OCI-LY7 (cell line): ENCODE measurements at regions of chr12 and their contacts with region 1.

Region 1: DNA sequence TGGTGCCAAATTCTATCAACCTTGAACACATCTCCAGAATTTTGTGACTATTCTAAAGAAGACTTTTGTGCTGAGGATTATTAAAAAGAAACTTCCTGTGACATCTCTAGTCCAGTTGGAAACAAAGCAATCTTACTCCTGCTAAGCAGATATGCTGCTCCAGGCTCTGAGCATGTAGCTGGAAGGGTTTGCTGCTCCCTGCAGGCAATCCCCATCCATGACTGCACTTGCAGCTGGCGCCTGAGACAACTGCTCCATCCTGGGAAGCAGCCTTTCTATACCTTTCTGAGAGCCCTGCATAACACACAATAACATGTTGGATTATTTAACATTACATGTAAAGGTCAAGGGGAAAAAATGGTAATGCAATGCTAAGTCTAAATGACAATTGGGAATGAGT is 105.1 kb downstream of the NDUFA12 start:
- DNase-seq: no peak
- H3K4me3 ChIP-seq: no peak overlapping the region
- H3K27ac ChIP-seq: no peak overlapping the region
- H3K4me1 ChIP-seq: no peaks in the 10 kb centered on the region
- CTCF ChIP-seq: peak; percentile 45; the same call in 1 of the 2 replicates

Region 2: GRCh38 chr12:94795520-94795919 is 102.9 kb before region 1 on chr12:
- CTCF ChIA-PET with region 1: no interaction called
- POLR2A ChIA-PET with region 1: no interaction called
- intact Hi-C with region 1: no loop called
- DNase-seq: no peak
- H3K4me3 ChIP-seq: no peak overlapping the region
- H3K27ac ChIP-seq: no peak overlapping the region
- H3K4me1 ChIP-seq: peaks cover 39% of the 10 kb centered on the region
- CTCF ChIP-seq: no peak

Region 3: DNA sequence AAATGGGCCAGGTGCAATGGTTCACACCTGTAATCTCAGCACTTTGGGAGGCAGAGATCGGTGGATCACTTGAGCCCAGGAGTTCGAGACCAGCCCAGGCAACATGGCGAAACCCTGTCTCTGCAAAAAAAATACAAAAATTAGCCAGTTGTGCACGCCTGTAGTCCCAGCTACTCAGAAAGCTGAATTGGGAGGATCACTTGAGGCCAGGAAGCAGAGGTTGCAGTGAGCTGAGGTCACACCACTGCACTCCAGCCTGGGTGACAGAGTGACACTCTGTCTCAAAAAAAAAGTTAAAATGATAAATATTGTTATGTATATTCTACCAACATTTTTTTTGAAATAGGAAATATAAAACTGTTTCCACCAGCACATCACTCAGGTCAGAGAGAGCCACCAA is 40.2 kb after region 1 on chr12:
- CTCF ChIA-PET with region 1: no interaction called
- POLR2A ChIA-PET with region 1: no interaction called
- intact Hi-C with region 1: loop called (anchors 1 kb)
- DNase-seq: no peak
- H3K4me3 ChIP-seq: no peak overlapping the region
- H3K27ac ChIP-seq: no peak overlapping the region
- H3K4me1 ChIP-seq: peaks cover 2% of the 10 kb centered on the region
- CTCF ChIP-seq: no peak

Region 4: DNA sequence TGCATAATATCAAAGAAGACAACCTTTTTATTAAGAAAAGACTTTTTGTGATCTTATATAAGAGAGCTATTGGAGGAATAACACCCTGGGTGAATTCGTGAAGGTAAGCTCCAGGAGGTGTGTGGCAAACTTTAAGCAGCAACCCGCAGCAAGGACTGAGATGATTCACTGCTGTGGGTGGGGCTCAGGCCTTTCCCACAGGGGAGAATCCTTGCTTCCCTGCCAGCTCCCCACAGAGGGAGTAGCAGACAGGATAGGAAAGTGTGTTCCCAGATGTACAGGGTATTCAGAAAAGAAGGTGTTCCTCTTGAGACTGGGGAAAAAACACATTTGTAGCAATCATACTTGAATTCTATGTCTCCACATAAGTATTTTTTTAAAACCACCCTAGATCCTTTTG is 95.9 kb after region 1 on chr12:
- CTCF ChIA-PET with region 1: no interaction called
- POLR2A ChIA-PET with region 1: no interaction called
- intact Hi-C with region 1: no loop called
- DNase-seq: no peak
- H3K4me3 ChIP-seq: no peak overlapping the region
- H3K27ac ChIP-seq: no peak overlapping the region
- H3K4me1 ChIP-seq: peaks cover 19% of the 10 kb centered on the region
- CTCF ChIP-seq: no peak